Activated naive CD8-positive, alpha-beta T cell treated with anti-CD3 and anti-CD28 coated beads, Interleukin-2, amount 10 ng/mL, durations not matched to agents 7 days and 5 days (primary cell): ENCODE measurements at regions of chr3 and their contacts with region 1.

Region 1: GRCh38 chr3:98563661-98564281 is 29.6 kb downstream of the CPOX start:
- DNase-seq: no peak
- ATAC-seq: peak; percentile 6
- H3K4me3 Mint-ChIP-seq: peak overlapping the region; percentile 89
- H3K27ac Mint-ChIP-seq: peak overlapping the region; percentile 99
- H3K4me1 Mint-ChIP-seq: peaks cover 70% of the 10 kb centered on the region
- H3K27me3 Mint-ChIP-seq: no peaks in the 10 kb centered on the region

Region 2: DNA sequence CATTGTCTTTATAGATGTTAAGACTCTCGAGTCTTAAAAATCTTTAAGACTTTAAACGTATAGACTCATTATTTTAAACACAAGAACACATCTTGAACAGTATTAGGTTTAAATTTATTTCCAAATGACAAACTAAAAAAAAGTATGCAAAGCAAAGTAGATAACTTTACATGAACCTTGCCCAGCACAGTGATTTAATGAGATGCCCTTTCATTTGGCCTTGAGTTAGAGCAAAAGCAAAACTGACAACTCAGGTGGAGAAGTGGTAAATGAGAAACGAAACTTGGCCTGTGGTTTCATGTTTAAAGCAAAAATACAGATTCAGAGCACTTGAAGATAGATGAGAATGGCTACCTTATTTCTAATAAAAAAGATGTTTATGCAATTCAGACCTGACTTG is 23.4 kb before region 1 on chr3:
- POLR2A ChIA-PET with region 1: interaction called, 32 read pairs
- DNase-seq: no peak
- ATAC-seq: peak; percentile 68
- H3K4me3 Mint-ChIP-seq: peak overlapping the region; percentile 57
- H3K27ac Mint-ChIP-seq: peak overlapping the region; percentile 85
- H3K4me1 Mint-ChIP-seq: peaks cover 54% of the 10 kb centered on the region
- H3K27me3 Mint-ChIP-seq: no peaks in the 10 kb centered on the region